Heart left ventricle (tissue), 16 donors: ENCODE measurements at regions of chr17 and their contacts with region 1.

Region 1: GRCh38 chr17:33981711-33982601 is 273.1 kb upstream of the CCL2 start:
- DNase-seq: no peak
- ATAC-seq: peak in 1 of 4 donors; percentile 31
- H3K4me3 ChIP-seq: no peak overlapping the region
- H3K27ac ChIP-seq: no peak overlapping the region
- H3K4me1 ChIP-seq: peaks cover 0 to 35% (median 2%) of the 10 kb centered on the region in 12 donors
- H3K27me3 ChIP-seq: no peaks in the 10 kb centered on the region
- CTCF ChIP-seq: no peak
- POLR2A ChIP-seq: no peak

Region 2: GRCh38 chr17:33940769-33941370 is 41.1 kb before region 1 on chr17:
- intact Hi-C with region 1: loop called in 1 of 10 experiments (anchors 5 kb)
- DNase-seq: peak in 1 of 5 donors; percentile 42
- ATAC-seq: peak in 3 of 4 donors; percentile 71 to 85 (median 78)
- H3K4me3 ChIP-seq: no peak overlapping the region
- H3K27ac ChIP-seq: no peak overlapping the region
- H3K4me1 ChIP-seq: peaks cover 0 to 20% (median 0%) of the 10 kb centered on the region in 12 donors
- H3K27me3 ChIP-seq: peaks cover 0 to 11% (median 0%) of the 10 kb centered on the region in 9 donors
- CTCF ChIP-seq: no peak
- POLR2A ChIP-seq: no peak

Region 3: GRCh38 chr17:34140006-34140405 is 158.1 kb after region 1 on chr17:
- intact Hi-C with region 1: no loop called
- DNase-seq: no peak
- ATAC-seq: no peak
- H3K4me3 ChIP-seq: no peak overlapping the region
- H3K27ac ChIP-seq: no peak overlapping the region
- H3K4me1 ChIP-seq: no peaks in the 10 kb centered on the region
- H3K27me3 ChIP-seq: peaks cover 0 to 15% (median 3%) of the 10 kb centered on the region in 9 donors
- CTCF ChIP-seq: no peak
- POLR2A ChIP-seq: no peak